ENCODE measurements at regions of chr6 and their contacts with region 1.

Region 1: GRCh38 chr6:42166444-42167141 is 6.6 kb upstream of the GUCA1A start:
- DNase-seq: peak in 1 of 2 donors; percentile 67
- H3K4me3 ChIP-seq: no peak overlapping the region
- H3K27ac ChIP-seq: no peak overlapping the region
- H3K4me1 ChIP-seq: no peaks in the 10 kb centered on the region
- H3K27me3 ChIP-seq: no peaks in the 10 kb centered on the region
- CTCF ChIP-seq: peak; percentile 63 to 87 (median 85)

Region 2: GRCh38 chr6:42050266-42051032 is 116.1 kb before region 1 on chr6 and contains the start of gene TAF8:
- intact Hi-C with region 1: no loop called
- DNase-seq: peak; percentile 66 to 94
- H3K4me3 ChIP-seq: peak within 1 kb of the TSS; percentile 71 to 88
- H3K27ac ChIP-seq: peak within 1 kb of the TSS; percentile 83 to 95
- H3K4me1 ChIP-seq: peaks cover 15 to 26% of the 10 kb centered on the region in 2 donors
- H3K27me3 ChIP-seq: no peaks in the 10 kb centered on the region
- CTCF ChIP-seq: no peak
- total RNA-seq, gene TAF8: 26.0 TPM

Region 3: GRCh38 chr6:42078386-42078785 is 88.2 kb before region 1 on chr6:
- intact Hi-C with region 1: loop called (anchors 2 kb)
- DNase-seq: no peak
- H3K4me3 ChIP-seq: no peak overlapping the region
- H3K27ac ChIP-seq: no peak overlapping the region
- H3K4me1 ChIP-seq: no peaks in the 10 kb centered on the region
- H3K27me3 ChIP-seq: no peaks in the 10 kb centered on the region
- CTCF ChIP-seq: no peak

Region 4: GRCh38 chr6:42136508-42137193 is 29.9 kb before region 1 on chr6:
- intact Hi-C with region 1: no loop called
- DNase-seq: no peak
- H3K4me3 ChIP-seq: no peak overlapping the region
- H3K27ac ChIP-seq: no peak overlapping the region
- H3K4me1 ChIP-seq: no peaks in the 10 kb centered on the region
- H3K27me3 ChIP-seq: no peaks in the 10 kb centered on the region
- CTCF ChIP-seq: no peak